CD4-positive, alpha-beta T cell (primary cell): ENCODE measurements at regions of chr4 and their contacts with region 1.

Region 1: GRCh38 chr4:2241410-2242353 is at the starts of genes HAUS3 and POLN:
- DNase-seq: peak; percentile 98 to 100 (median 99)
- ATAC-seq: peak; percentile 87
- H3K4me3 ChIP-seq: peak within 1 kb of the TSS; percentile 95
- H3K4me3 Mint-ChIP-seq: peak within 1 kb of the TSS; percentile 92
- H3K27ac ChIP-seq: peak within 1 kb of the TSS; percentile 84 to 88
- H3K27ac Mint-ChIP-seq: peak within 1 kb of the TSS; percentile 95
- H3K4me1 ChIP-seq: peaks cover 30% of the 10 kb centered on the region
- H3K4me1 Mint-ChIP-seq: peaks cover 70% of the 10 kb centered on the region
- H3K27me3 ChIP-seq: no peaks in the 10 kb centered on the region
- H3K27me3 Mint-ChIP-seq: no peaks in the 10 kb centered on the region
- CTCF ChIP-seq: no peak
- total RNA-seq, gene HAUS3: 143 to 148 TPM
- total RNA-seq, gene POLN: 2.1 to 2.3 TPM

Region 2: DNA sequence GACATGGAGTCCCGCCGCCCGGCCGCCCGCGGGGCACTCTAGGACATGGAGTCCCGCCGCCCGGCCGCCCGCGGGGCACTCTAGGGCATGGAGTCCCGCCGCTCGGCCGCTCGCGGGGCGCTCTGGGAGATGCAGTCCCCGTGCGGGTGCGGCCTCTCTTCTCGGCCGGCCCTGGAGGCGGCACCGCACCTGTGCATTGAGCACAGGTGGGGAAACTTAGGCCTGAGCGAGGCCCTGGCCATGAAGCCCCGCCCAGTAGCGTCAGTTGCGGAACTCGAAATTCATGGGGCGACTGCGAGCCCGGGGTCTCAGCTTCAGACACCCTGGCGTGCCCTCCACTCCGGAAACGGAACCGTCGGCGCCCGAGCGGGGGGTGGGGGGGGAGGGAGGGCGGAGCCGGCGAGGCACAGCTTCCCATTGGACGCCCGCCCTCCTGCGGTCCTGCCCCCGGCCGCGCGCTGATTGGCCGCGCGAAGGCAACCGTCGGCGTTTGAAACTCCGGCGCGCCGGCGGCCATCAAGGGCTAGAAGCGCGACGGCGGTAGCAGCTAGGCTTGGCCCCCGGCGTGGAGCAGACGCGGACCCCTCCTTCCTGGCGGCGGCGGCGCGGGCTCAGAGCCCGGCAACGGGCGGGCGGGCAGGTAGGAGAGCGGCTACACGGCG is 520.5 kb before region 1 on chr4 and contains the starts of genes TACC3 and TMEM129:
- CTCF ChIA-PET with region 1: no interaction called
- POLR2A ChIA-PET with region 1: no interaction called
- intact Hi-C with region 1: loop called in 1 of 2 experiments (anchors 5 kb)
- DNase-seq: peak; percentile 90 to 99 (median 95)
- ATAC-seq: peak; percentile 80
- H3K4me3 ChIP-seq: peak within 1 kb of the TSS; percentile 53
- H3K4me3 Mint-ChIP-seq: peak within 1 kb of the TSS; percentile 92
- H3K27ac ChIP-seq: peak within 1 kb of the TSS; percentile 85 to 88
- H3K27ac Mint-ChIP-seq: peak within 1 kb of the TSS; percentile 99
- H3K4me1 ChIP-seq: peaks cover 77% of the 10 kb centered on the region
- H3K4me1 Mint-ChIP-seq: peaks cover 56% of the 10 kb centered on the region
- H3K27me3 ChIP-seq: no peaks in the 10 kb centered on the region
- H3K27me3 Mint-ChIP-seq: no peaks in the 10 kb centered on the region
- CTCF ChIP-seq: no peak
- total RNA-seq, gene TACC3: 123 TPM
- total RNA-seq, gene TMEM129: 17.2 to 17.6 TPM

Region 3: DNA sequence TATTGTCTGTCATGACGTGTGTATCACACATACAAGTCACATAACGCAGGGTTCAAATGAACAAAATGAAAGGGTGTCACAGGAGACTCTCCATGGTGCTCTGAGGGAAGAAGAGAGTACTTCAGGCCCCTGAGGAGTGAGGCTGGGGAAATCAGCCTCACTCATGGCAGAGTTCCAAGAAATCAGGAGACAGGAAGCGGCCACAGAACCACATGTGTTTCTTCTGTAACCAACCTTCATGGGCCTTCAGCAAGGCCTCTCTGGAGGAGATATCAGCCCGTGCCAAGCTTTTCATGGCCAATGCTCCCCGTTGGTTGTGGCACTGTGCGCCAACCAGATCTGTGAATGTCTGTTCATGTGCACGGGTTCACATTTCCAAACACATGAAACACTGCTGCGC is 106.6 kb before region 1 on chr4:
- CTCF ChIA-PET with region 1: no interaction called
- POLR2A ChIA-PET with region 1: no interaction called
- intact Hi-C with region 1: no loop called
- DNase-seq: peak in 6 of 14 experiments; percentile 5 to 52 (median 34)
- ATAC-seq: peak; percentile 55
- H3K4me3 ChIP-seq: no peak overlapping the region
- H3K4me3 Mint-ChIP-seq: no peak overlapping the region
- H3K27ac ChIP-seq: no peak overlapping the region
- H3K27ac Mint-ChIP-seq: no peak overlapping the region
- H3K4me1 ChIP-seq: peaks cover 11% of the 10 kb centered on the region
- H3K4me1 Mint-ChIP-seq: peaks cover 22% of the 10 kb centered on the region
- H3K27me3 ChIP-seq: no peaks in the 10 kb centered on the region
- H3K27me3 Mint-ChIP-seq: no peaks in the 10 kb centered on the region
- CTCF ChIP-seq: no peak

Region 4: GRCh38 chr4:2163311-2163821 is 78.3 kb before region 1 on chr4:
- CTCF ChIA-PET with region 1: no interaction called
- POLR2A ChIA-PET with region 1: no interaction called
- intact Hi-C with region 1: no loop called
- DNase-seq: no peak
- ATAC-seq: no peak
- H3K4me3 ChIP-seq: no peak overlapping the region
- H3K4me3 Mint-ChIP-seq: no peak overlapping the region
- H3K27ac ChIP-seq: no peak overlapping the region
- H3K27ac Mint-ChIP-seq: no peak overlapping the region
- H3K4me1 ChIP-seq: no peaks in the 10 kb centered on the region
- H3K4me1 Mint-ChIP-seq: no peaks in the 10 kb centered on the region
- H3K27me3 ChIP-seq: no peaks in the 10 kb centered on the region
- H3K27me3 Mint-ChIP-seq: no peaks in the 10 kb centered on the region
- CTCF ChIP-seq: no peak

Region 5: DNA sequence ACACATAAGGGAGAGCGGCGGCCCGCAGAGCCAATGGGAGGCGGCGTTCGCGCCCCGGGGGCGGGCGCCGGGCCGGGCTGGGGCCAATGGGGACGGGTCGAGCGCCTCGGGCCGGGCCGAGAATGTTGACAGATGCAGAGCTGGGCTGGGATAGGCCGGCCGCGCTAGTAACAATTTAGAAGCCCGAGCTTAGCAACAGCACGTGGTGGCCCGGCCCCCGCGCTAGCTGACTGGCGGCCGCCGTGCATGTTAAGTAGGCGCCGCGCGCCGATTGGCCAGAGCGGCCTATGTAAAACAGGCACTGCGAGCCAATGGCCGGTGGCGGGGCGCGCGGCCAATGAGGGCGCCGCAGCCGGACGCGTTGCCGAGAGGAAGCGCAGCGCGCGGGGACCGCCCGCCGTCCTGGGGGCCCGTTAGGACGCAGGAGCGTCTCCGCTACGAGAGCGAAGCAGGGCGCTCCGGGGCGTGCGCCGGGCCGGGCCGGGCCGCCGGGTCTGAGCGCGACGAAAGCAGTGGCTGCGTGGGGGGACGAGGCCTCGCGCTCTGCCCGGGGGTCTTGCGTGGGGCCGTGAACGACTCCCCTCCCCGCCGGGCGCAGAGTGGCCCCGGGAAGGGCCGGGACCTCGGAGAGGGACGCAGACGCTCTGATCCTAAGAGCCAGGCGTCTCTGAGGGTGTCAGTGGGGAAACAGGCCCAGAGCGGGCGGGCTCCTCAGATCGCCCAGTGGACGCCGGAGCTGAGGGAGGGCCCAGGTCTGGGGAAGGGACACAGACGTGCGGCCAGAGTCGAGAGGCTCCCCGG is 20.7 kb after region 1 on chr4:
- CTCF ChIA-PET with region 1: interaction called, 3 read pairs
- POLR2A ChIA-PET with region 1: interaction called, 84 read pairs
- intact Hi-C with region 1: loop called (anchors 1 kb)
- DNase-seq: peak; percentile 92 to 99 (median 97)
- ATAC-seq: peak; percentile 89
- H3K4me3 ChIP-seq: peak overlapping the region; percentile 64
- H3K4me3 Mint-ChIP-seq: peak overlapping the region; percentile 96
- H3K27ac ChIP-seq: peak overlapping the region; percentile 84 to 93
- H3K27ac Mint-ChIP-seq: peak overlapping the region; percentile 95
- H3K4me1 ChIP-seq: peaks cover 51% of the 10 kb centered on the region
- H3K4me1 Mint-ChIP-seq: no peaks in the 10 kb centered on the region
- H3K27me3 ChIP-seq: no peaks in the 10 kb centered on the region
- H3K27me3 Mint-ChIP-seq: no peaks in the 10 kb centered on the region
- CTCF ChIP-seq: no peak

Region 6: DNA sequence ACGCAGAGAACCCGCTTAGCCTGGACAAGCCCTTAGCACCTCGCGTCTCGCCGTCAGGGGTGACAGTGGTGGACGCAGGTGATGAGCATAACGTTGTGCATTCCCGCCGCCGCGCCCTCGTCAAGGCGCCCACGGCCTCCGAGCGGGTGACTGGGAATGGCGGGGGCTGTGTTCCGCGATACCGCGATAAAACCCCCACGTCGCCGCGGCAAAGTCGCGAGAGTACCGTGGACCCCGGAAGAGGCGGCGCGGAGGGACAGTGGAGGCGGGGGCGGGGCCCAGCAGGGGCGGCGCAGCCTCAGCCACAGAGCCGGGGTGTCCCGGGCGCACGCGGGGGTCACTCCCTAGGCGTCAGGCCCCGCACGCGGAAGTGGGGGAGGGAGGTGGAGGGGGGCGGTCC is 123.0 kb after region 1 on chr4:
- CTCF ChIA-PET with region 1: no interaction called
- POLR2A ChIA-PET with region 1: no interaction called
- intact Hi-C with region 1: loop called in 1 of 2 experiments (anchors 5 kb)
- DNase-seq: peak; percentile 41 to 82 (median 57)
- ATAC-seq: peak; percentile 85
- H3K4me3 ChIP-seq: peak overlapping the region; percentile 73
- H3K4me3 Mint-ChIP-seq: peak overlapping the region; percentile 86
- H3K27ac ChIP-seq: peak overlapping the region; percentile 33 to 44
- H3K27ac Mint-ChIP-seq: peak overlapping the region; percentile 89
- H3K4me1 ChIP-seq: peaks cover 35% of the 10 kb centered on the region
- H3K4me1 Mint-ChIP-seq: peaks cover 21% of the 10 kb centered on the region
- H3K27me3 ChIP-seq: no peaks in the 10 kb centered on the region
- H3K27me3 Mint-ChIP-seq: no peaks in the 10 kb centered on the region
- CTCF ChIP-seq: no peak

Region 7: DNA sequence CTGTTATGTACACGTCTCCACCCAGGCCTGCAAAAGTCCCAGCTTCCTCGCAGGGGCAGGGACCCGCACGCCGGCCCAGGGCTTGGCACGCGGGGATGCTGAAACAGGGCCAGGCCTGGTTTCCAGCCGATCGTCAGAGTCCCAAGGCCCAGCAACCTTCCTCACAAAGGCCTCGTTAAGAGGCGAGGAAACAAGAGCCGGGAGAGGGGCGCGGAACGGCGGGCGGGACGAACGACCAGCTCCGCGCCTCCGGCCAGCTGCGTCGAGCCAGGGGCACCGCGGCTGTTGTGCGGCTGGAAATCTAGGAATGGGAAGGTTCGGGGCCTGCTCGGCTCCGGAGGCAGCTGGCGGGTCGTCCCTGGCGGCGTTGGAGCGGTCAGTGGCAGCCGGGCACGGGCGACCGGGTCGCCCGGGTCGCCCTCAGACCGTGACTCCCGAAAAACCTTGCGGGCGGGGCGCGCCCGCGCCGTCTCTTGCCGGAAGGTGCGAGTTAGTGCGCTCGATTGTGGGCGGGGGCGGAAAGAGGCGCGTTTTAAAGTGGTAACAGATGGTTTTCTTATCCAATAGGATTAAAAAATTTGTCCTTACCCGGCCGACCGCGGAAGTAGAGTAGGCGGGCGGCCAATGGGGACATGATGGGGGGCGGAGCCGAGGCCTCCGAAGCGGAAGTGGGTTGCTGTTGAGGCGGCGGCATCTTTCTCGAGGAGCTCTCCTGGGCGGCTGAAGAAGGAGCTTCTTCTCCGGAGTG is 226.9 kb after region 1 on chr4 and contains the start of gene RNF4:
- CTCF ChIA-PET with region 1: no interaction called
- POLR2A ChIA-PET with region 1: interaction called, 48 read pairs
- intact Hi-C with region 1: loop called in 1 of 2 experiments (anchors 2 kb)
- DNase-seq: peak; percentile 89 to 98 (median 94)
- ATAC-seq: peak; percentile 84
- H3K4me3 ChIP-seq: peak within 1 kb of the TSS; percentile 98
- H3K4me3 Mint-ChIP-seq: peak within 1 kb of the TSS; percentile 94
- H3K27ac ChIP-seq: peak within 1 kb of the TSS; percentile 96 to 97
- H3K27ac Mint-ChIP-seq: peak within 1 kb of the TSS; percentile 94
- H3K4me1 ChIP-seq: peaks cover 48% of the 10 kb centered on the region
- H3K4me1 Mint-ChIP-seq: peaks cover 48% of the 10 kb centered on the region
- H3K27me3 ChIP-seq: no peaks in the 10 kb centered on the region
- H3K27me3 Mint-ChIP-seq: no peaks in the 10 kb centered on the region
- CTCF ChIP-seq: no peak
- total RNA-seq, gene RNF4: 106 to 109 TPM

Region 8: GRCh38 chr4:2963175-2963965 is 721.7 kb after region 1 on chr4 and contains the starts of genes GRK4 and NOP14:
- CTCF ChIA-PET with region 1: no interaction called
- POLR2A ChIA-PET with region 1: interaction called, 3 read pairs
- intact Hi-C with region 1: loop called in 1 of 2 experiments (anchors 5 kb)
- DNase-seq: peak; percentile 92 to 99 (median 96)
- ATAC-seq: peak; percentile 89
- H3K4me3 ChIP-seq: peak within 1 kb of the TSS; percentile 87
- H3K4me3 Mint-ChIP-seq: peak within 1 kb of the TSS; percentile 92
- H3K27ac ChIP-seq: peak within 1 kb of the TSS; percentile 88 to 92
- H3K27ac Mint-ChIP-seq: peak within 1 kb of the TSS; percentile 84
- H3K4me1 ChIP-seq: peaks cover 34% of the 10 kb centered on the region
- H3K4me1 Mint-ChIP-seq: peaks cover 42% of the 10 kb centered on the region
- H3K27me3 ChIP-seq: no peaks in the 10 kb centered on the region
- H3K27me3 Mint-ChIP-seq: no peaks in the 10 kb centered on the region
- CTCF ChIP-seq: peak; percentile 62
- total RNA-seq, gene GRK4: 1.2 to 1.8 TPM
- total RNA-seq, gene NOP14: 21.8 TPM